HepG2 (cell line): ENCODE measurements at regions of chr6 and their contacts with region 1.

Region 1: DNA sequence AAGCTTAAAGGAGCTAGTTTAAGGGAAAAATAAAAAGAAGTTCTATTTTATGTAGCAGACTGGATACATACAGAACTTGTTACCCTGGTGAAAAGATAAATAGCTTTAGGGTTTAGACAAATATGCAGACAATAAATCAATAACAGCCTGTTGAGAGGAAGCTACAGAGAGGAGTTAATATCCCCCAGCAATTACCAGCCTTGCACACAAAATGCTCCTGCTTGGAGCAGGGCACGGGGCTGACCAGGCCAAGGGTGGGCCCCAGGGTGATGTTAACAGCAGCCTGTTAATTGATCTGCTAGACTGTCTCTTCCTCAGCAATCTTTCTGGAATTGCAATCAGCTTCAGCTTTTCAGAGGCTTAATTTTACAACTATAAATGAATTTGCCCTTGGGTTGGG is 125.1 kb upstream of the SOX4 start:
- DNase-seq: no peak
- ATAC-seq: peak; percentile 87
- H3K4me3 ChIP-seq: no peak overlapping the region
- H3K27ac ChIP-seq: peak overlapping the region; percentile 39
- H3K4me1 ChIP-seq: peaks cover 28% of the 10 kb centered on the region
- H3K27me3 ChIP-seq: no peaks in the 10 kb centered on the region
- CTCF ChIP-seq: no peak
- EP300 ChIP-seq: no peak
- POLR2A ChIP-seq: no peak
- RAD21 ChIP-seq: no peak

Region 2: DNA sequence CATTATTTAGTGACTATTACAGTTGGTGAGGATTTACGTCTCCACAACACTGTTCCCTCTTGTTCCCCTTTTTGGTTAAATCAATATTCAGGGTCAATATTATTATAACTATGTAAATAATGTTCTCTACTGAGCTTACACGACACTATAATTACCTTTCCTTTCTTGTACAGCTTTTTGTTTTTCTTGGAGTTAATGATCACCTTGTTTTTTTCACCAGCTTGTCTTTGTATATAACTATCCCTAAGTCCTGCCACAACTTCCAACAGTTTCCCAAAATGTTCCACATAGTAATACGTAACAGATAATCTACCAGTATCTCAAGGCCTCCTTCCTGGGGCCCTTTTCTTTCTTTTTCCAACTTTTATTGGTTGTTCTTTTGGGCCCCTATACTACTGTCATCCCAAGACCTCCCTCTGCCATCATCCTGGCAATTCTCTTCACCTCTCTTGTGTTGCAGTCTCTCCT is 16.9 kb before region 1 on chr6:
- CTCF ChIA-PET with region 1: no interaction called
- POLR2A ChIA-PET with region 1: interaction called, 11 read pairs
- in situ Hi-C with region 1: no loop called
- intact Hi-C with region 1: no loop called
- DNase-seq: peak; percentile 85
- ATAC-seq: peak; percentile 96
- H3K4me3 ChIP-seq: peak overlapping the region in 1 of 3 experiments; percentile 26; a peak in 2 of 6 replicates
- H3K27ac ChIP-seq: peak overlapping the region; percentile 62
- H3K4me1 ChIP-seq: peaks cover 64% of the 10 kb centered on the region
- H3K27me3 ChIP-seq: no peaks in the 10 kb centered on the region
- CTCF ChIP-seq: no peak
- EP300 ChIP-seq: peak; percentile 86 to 95
- POLR2A ChIP-seq: no peak
- RAD21 ChIP-seq: no peak